Colonic mucosa (tissue), 4 donors: ENCODE measurements at regions of chr12 and their contacts with region 1.

Region 1: DNA sequence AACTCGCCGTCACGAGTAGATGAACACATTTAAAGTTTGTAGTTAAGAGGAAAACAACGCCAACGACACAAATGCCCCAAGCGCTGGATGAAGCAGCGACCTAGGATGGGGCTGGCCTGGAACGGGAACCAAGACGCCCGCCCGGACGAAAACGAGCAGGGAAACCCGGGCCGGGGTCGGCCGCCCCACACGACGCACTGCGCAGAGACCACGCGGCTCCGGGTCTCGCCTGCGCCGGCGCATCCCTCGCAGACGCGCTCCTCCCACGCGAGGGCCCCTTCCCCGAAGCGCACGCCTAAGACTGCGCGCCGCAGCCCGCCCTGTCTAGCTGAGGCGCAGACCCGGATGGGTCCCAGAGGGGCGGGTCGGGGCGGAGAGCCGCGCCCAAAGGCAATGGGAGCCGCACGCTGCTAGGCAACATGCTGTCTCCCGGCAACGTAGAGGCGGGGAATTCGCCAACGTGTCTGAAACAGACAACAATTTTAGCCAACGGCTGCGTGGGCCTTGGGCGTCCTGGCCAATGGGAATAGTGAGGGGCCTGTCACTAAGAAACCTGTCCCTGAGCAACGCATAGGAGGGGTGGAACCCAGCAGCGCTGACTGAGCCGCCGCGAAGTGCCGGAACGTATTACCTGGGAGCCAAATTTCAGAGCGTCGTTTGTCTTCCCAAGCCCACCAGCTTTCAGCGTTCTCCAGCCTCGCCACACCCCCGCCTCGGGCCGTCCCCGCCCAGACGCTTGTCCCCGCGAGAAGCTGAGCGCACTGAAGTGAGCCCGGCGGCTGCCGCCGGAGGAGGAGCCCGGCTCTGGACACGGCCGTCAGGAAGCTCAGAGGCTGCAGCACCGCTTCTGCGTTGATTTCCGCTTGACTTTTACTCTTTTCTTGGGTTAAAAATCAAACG is 21.0 kb upstream of the CHFR start:
- DNase-seq: peak; percentile 99
- H3K4me3 ChIP-seq: peak overlapping the region; percentile 64
- H3K27ac ChIP-seq: peak overlapping the region; percentile 67
- H3K4me1 ChIP-seq: peaks cover 4% of the 10 kb centered on the region
- H3K27me3 ChIP-seq: no peaks in the 10 kb centered on the region
- CTCF ChIP-seq: no peak

Region 2: DNA sequence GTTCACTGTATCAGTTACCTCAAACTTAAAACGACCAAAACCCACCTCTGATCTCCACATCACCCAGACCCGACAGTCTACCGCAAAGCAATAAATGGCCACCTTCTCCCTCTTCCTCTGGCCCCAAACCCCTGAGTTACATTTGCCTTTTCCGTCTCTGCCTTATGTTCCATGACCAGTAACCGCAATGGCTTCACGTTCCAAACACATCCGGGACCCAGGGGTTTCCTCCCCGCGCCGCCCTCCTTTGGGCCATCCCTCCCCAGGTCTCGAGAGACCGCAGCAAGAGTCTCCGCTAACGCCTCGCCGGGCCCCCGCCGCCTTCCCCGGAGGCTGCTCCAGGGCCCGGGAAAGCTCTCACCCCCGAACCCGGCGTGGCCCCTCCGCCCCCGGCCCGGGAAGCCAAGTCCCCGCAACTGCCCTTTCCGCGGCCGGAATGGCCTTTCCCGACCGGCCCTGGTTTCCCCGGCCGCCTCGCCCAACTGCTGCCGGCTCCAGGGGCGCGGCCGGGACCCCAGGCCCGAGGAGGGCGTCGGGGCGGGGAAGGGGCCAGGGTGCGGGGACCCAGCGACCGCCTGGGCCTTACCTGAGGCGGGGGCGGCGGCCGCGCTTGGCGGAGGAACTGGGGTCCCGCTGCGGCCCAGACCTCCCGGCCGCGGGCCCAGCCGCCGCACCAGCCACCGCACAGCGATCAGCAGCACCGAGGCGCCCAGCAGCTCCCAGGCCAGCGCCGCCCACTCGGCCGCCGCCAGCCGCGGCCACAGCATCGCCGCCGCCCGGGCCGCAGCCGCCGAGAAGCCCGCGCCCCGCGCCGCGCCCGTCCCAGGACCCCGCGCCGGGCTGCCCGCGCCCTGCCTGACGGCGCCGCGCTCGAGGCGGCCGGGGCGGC is 147.1 kb before region 1 on chr12 and contains the start of gene ANKLE2:
- intact Hi-C with region 1: loop called (anchors 10 kb)
- DNase-seq: peak; percentile 37
- H3K4me3 ChIP-seq: peak within 1 kb of the TSS; percentile 81
- H3K27ac ChIP-seq: peak within 1 kb of the TSS; percentile 95
- H3K4me1 ChIP-seq: no peaks in the 10 kb centered on the region
- H3K27me3 ChIP-seq: no peaks in the 10 kb centered on the region
- CTCF ChIP-seq: no peak
- total RNA-seq, gene ANKLE2: 33.7 to 41.8 TPM

Region 3: DNA sequence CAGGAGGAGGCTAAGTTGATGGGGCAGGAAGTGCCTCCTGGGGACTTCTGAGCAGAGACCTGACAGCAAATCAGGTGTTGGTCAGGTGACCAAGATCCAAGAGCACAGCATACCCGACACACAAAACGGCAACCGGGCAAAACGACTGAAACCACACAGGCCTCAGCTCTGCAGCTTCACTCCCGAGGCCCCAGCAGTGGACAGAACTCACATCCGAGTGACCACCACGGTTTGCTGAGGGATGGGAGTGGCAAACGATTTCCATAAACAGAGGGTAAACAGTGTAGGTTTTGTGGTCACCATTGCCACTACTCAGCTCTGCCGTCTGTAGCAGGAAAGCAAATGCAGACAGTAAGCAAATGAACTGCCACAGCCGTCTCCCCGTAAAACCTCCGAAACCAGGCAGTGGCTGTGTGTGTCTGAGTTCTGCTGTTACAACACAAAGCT is 35.4 kb before region 1 on chr12:
- intact Hi-C with region 1: no loop called
- DNase-seq: no peak
- H3K4me3 ChIP-seq: no peak overlapping the region
- H3K27ac ChIP-seq: no peak overlapping the region
- H3K4me1 ChIP-seq: no peaks in the 10 kb centered on the region
- H3K27me3 ChIP-seq: no peaks in the 10 kb centered on the region
- CTCF ChIP-seq: no peak